AG04449 (cell line): ENCODE measurements at regions of chr22 and their contacts with region 1.

Region 1: GRCh38 chr22:34850010-34850409 is 215.9 kb upstream of the ISX start:
- DNase-seq: no peak
- H3K4me3 ChIP-seq: no peak overlapping the region
- CTCF ChIP-seq: no peak

Region 2: GRCh38 chr22:34769361-34769760 is 80.6 kb before region 1 on chr22:
- CTCF ChIA-PET with region 1: no interaction called
- POLR2A ChIA-PET with region 1: no interaction called
- DNase-seq: no peak
- H3K4me3 ChIP-seq: no peak overlapping the region
- CTCF ChIP-seq: no peak

Region 3: DNA sequence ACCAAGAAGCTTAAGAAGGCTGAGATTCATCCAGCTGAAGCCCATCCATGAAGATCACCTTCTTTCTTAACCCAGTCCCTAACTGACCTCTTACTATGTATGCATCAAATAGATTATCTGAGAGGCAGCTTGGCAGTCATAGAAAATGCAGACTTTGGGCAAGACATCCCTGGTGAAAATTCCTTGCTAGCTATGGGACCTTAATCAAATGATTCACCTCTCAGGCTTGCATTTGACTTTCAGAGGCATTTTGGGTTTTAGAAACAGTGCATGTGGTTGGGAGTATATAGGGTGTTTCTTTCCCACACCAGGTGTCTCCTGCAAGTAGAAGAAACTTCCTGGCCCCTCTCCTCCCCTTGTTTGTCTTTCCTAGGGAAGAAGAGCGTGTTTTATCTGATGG is 27.5 kb after region 1 on chr22:
- CTCF ChIA-PET with region 1: interaction called, 5 read pairs
- POLR2A ChIA-PET with region 1: interaction called, 11 read pairs
- DNase-seq: no peak
- H3K4me3 ChIP-seq: no peak overlapping the region
- CTCF ChIP-seq: no peak